ENCODE measurements at regions of chr7 and their contacts with region 1.

Region 1: DNA sequence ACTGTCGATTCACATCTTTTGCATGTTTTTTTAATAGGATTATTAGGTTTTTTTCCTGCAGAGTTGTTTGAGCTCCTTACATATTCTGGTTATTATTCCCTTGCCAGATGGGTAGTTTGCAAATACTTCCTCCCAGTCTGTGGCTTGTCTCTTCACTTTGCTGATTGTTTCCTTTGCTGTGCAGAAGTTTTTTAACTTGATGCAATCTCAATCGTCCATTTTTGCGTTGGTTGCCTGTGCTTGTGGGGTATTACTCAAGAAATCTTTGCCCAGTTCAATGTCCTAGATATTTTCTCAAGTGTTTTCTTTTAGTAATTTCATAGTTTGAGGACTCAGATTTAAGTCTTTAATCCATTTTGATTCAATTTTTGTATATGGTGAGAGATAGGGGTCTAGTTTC is 95.4 kb downstream of the TBXAS1 start:
- DNase-seq: no peak
- ATAC-seq: no peak
- H3K4me3 ChIP-seq: no peak overlapping the region
- H3K4me3 Mint-ChIP-seq: no peak overlapping the region
- H3K27ac ChIP-seq: no peak overlapping the region
- H3K27ac Mint-ChIP-seq: peak overlapping the region; percentile 19 to 45
- H3K4me1 ChIP-seq: peaks cover 13% of the 10 kb centered on the region
- H3K4me1 Mint-ChIP-seq: peaks cover 52 to 65% of the 10 kb centered on the region in 2 donors
- H3K27me3 ChIP-seq: no peaks in the 10 kb centered on the region
- H3K27me3 Mint-ChIP-seq: no peaks in the 10 kb centered on the region
- CTCF ChIP-seq: no peak

Region 2: GRCh38 chr7:139889186-139889871 is 35.1 kb before region 1 on chr7:
- intact Hi-C with region 1: loop called (anchors 5 kb)
- DNase-seq: no peak
- ATAC-seq: no peak
- H3K4me3 ChIP-seq: no peak overlapping the region
- H3K4me3 Mint-ChIP-seq: no peak overlapping the region
- H3K27ac ChIP-seq: no peak overlapping the region
- H3K27ac Mint-ChIP-seq: peak overlapping the region; percentile 92 to 94
- H3K4me1 ChIP-seq: peaks cover 22% of the 10 kb centered on the region
- H3K4me1 Mint-ChIP-seq: peaks cover 57 to 60% of the 10 kb centered on the region in 2 donors
- H3K27me3 ChIP-seq: no peaks in the 10 kb centered on the region
- H3K27me3 Mint-ChIP-seq: no peaks in the 10 kb centered on the region
- CTCF ChIP-seq: no peak

Region 3: GRCh38 chr7:140284062-140284461 is 359.6 kb after region 1 on chr7:
- intact Hi-C with region 1: no loop called
- DNase-seq: no peak
- ATAC-seq: no peak
- H3K4me3 ChIP-seq: no peak overlapping the region
- H3K4me3 Mint-ChIP-seq: no peak overlapping the region
- H3K27ac ChIP-seq: no peak overlapping the region
- H3K27ac Mint-ChIP-seq: no peak overlapping the region
- H3K4me1 ChIP-seq: no peaks in the 10 kb centered on the region
- H3K4me1 Mint-ChIP-seq: no peaks in the 10 kb centered on the region
- H3K27me3 ChIP-seq: no peaks in the 10 kb centered on the region
- H3K27me3 Mint-ChIP-seq: peaks cover 0 to 2% of the 10 kb centered on the region in 2 donors
- CTCF ChIP-seq: no peak

Measured in natural killer cell (primary cell).